Activated B cell treated with CpG ODN at 0.5 μM for 24 hours (primary cell): ENCODE measurements at regions of chr21 and their contacts with region 1.

Region 1: GRCh38 chr21:33931799-33932390 is 16.3 kb upstream of the ATP5PO start:
- DNase-seq: no peak
- ATAC-seq: peak; percentile 52
- H3K4me3 Mint-ChIP-seq: peak overlapping the region; percentile 89
- H3K27ac Mint-ChIP-seq: peak overlapping the region; percentile 92
- H3K4me1 Mint-ChIP-seq: peaks cover 13% of the 10 kb centered on the region
- H3K27me3 Mint-ChIP-seq: no peaks in the 10 kb centered on the region
- CTCF ChIP-seq: no peak

Region 2: DNA sequence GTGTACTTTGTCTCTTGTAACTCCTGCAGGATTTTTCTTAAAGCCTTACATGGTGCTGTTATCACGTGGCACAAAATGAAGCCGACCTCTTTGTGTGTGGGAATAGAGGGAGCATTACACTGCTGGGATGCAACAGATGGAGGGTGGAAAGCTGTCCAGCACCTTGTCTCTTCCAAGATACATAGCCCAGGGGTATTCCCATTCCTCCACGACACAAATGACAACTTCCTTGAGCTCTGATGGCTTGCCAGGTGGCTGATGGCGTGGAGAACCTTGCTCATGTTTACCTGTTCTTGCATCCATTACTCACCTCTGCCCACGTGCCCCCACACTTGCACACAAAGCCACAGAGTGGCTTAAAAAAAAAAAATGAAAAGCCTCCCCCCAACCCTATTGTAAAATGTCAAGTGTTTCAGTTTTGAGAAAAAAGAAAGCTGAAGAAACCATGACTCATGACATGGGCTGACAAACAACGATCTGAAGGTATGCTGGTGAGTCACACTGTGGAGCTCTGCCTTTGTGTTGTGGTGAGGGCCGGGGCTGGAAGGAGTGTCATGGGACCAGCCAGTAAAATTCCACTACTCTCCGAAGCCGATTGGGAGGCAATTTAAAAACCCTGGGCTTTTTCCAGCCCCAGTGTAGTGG is 15.7 kb after region 1 on chr21:
- CTCF ChIA-PET with region 1: no interaction called
- POLR2A ChIA-PET with region 1: interaction called, 20 read pairs
- intact Hi-C with region 1: loop called (anchors 2 kb)
- DNase-seq: peak; percentile 36
- ATAC-seq: peak; percentile 74
- H3K4me3 Mint-ChIP-seq: peak overlapping the region; percentile 75
- H3K27ac Mint-ChIP-seq: peak overlapping the region; percentile 92
- H3K4me1 Mint-ChIP-seq: peaks cover 55% of the 10 kb centered on the region
- H3K27me3 Mint-ChIP-seq: no peaks in the 10 kb centered on the region
- CTCF ChIP-seq: no peak